Activated T-helper 2 cell treated with anti-CD3 and anti-CD28 coated beads, Interferon-gamma antibody, Interleukin-2, Interleukin-4, amounts not matched to agents 10 μg/mL and 5 μg/mL and 100 μg/mL, durations not matched to agents 14 hours and 24 hours and 36 hours (primary cell): ENCODE measurements at regions of chr6 and their contacts with region 1.

Region 1: DNA sequence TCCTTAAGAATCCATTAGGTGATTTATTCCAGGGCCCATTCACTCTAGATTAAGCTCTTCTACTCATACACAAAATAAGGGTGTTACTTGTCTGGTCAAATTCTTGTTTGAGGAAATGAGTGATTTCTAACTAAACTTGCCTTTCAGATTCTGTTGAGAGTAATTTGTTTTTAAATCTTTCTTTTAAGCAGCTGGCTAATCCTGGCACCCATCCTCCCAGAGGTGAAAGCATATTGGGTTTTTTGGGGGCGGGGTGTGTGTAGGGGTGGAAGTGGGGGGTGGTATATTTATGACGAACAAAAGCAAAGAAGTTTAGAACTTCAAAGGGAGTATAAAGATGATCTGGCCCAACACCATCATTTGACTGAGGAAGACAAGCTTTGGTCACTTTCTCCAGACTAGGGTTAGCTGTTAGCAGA is 94.7 kb downstream of the RTN4IP1 start:
- DNase-seq: no peak
- H3K4me3 Mint-ChIP-seq: peak overlapping the region; percentile 9
- H3K27ac Mint-ChIP-seq: peak overlapping the region; percentile 82
- H3K4me1 Mint-ChIP-seq: peaks cover 70% of the 10 kb centered on the region
- H3K27me3 Mint-ChIP-seq: no peaks in the 10 kb centered on the region

Region 2: GRCh38 chr6:106556368-106556960 is 21.9 kb after region 1 on chr6:
- intact Hi-C with region 1: loop called (anchors 2 kb)
- DNase-seq: no peak
- H3K4me3 Mint-ChIP-seq: no peak overlapping the region
- H3K27ac Mint-ChIP-seq: no peak overlapping the region
- H3K4me1 Mint-ChIP-seq: peaks cover 20% of the 10 kb centered on the region
- H3K27me3 Mint-ChIP-seq: no peaks in the 10 kb centered on the region

Region 3: DNA sequence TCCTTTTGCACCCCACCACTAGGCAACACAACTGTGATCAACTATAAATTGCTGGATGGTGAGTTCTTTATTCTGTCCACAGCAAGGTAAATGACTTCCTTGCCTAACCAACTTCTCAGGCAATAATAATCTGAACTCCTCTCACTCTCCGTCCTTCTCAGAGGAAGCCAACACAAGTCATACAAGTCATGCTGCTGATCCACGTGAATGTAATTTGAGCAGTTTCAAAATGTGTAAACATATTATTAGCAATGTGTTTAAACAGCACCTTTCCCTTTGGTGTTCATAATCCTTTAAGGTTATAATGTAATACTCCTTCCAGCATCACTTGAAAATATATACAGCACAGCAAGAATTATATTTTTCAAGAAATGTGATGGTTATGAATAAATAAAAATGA is 222.7 kb after region 1 on chr6:
- intact Hi-C with region 1: no loop called
- DNase-seq: no peak
- H3K4me3 Mint-ChIP-seq: no peak overlapping the region
- H3K27ac Mint-ChIP-seq: no peak overlapping the region
- H3K4me1 Mint-ChIP-seq: no peaks in the 10 kb centered on the region
- H3K27me3 Mint-ChIP-seq: peaks cover 10% of the 10 kb centered on the region